ENCODE measurements at regions of chrX and their contacts with region 1.

Region 1: DNA sequence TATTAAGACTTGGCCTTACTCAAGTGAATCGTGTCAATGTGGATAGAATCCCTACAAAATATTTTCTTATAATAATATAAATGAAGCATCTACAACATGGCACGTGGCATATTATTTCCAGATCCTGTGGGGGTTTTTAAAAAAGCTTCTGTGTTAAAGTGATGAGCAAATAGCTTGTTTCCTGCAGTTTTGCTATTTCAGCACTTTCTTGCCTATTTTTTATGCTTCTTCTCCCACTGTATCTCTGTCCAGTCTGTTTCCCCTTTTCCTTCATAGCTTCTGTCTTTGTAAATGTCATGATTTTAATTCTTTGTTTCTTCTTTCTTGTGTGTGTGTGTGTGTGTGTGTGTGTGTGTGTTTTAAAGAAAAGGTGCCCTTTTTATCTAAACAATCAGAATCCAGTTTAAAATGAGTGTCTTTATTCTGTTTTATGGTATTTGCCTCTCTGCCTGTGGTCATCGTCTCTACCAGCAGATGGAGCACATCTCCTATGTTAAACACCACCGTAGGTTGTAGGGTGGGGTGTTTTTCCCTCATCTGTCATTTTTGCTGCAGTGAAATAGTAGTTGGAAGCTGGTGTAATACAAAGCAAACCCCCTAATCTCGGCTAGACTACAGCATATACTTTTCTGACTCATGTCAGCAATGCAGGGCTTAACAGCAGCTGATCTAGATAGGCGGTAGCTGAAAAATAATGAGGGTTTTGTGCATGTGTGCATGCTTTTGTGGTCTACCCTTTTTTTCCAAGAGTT is 33.1 kb downstream of the FTHL17 start:
- DNase-seq: peak; percentile 3 to 6
- ATAC-seq: peak in 1 of 2 experiments; percentile 69; a peak in 3 of 6 replicates
- H3K4me3 ChIP-seq: no peak overlapping the region
- H3K27ac ChIP-seq: no peak overlapping the region
- H3K4me1 ChIP-seq: no peaks in the 10 kb centered on the region
- CTCF ChIP-seq: peak; percentile 35; the same call in 2 of the 3 replicates
- EP300 ChIP-seq: no peak
- POLR2A ChIP-seq: no peak
- RAD21 ChIP-seq: peak; percentile 35 to 47; a peak in 4 of 5 replicates

Region 2: DNA sequence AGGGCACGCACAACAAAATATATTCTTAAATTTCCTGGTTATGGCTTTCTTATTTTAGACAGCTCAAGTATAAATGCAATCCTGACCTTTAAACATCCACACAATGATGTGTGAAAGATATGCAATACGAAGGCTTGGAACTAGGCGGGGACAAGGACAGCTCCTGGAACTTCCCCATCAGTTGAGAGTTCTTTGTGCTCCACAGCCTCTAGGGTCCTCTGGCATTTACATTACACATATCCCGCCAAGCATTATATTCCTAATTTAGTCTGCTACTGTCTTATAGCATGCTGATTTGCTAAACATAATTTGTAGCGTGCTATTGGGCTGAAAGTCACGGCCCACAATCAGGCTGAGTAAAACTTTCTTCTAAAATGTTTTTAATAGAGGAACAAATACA is 41.3 kb before region 1 on chrX:
- CTCF ChIA-PET with region 1: no interaction called
- POLR2A ChIA-PET with region 1: no interaction called
- DNase-seq: no peak
- ATAC-seq: no peak
- H3K4me3 ChIP-seq: no peak overlapping the region
- H3K27ac ChIP-seq: no peak overlapping the region
- H3K4me1 ChIP-seq: no peaks in the 10 kb centered on the region
- CTCF ChIP-seq: no peak
- EP300 ChIP-seq: no peak
- POLR2A ChIP-seq: no peak
- RAD21 ChIP-seq: no peak

Region 3: GRCh38 chrX:31053621-31054020 is 14.9 kb after region 1 on chrX:
- CTCF ChIA-PET with region 1: interaction called, 16 read pairs
- POLR2A ChIA-PET with region 1: no interaction called
- DNase-seq: no peak
- ATAC-seq: no peak
- H3K4me3 ChIP-seq: no peak overlapping the region
- H3K27ac ChIP-seq: no peak overlapping the region
- H3K4me1 ChIP-seq: no peaks in the 10 kb centered on the region
- CTCF ChIP-seq: no peak
- EP300 ChIP-seq: no peak
- POLR2A ChIP-seq: no peak
- RAD21 ChIP-seq: no peak

Region 4: DNA sequence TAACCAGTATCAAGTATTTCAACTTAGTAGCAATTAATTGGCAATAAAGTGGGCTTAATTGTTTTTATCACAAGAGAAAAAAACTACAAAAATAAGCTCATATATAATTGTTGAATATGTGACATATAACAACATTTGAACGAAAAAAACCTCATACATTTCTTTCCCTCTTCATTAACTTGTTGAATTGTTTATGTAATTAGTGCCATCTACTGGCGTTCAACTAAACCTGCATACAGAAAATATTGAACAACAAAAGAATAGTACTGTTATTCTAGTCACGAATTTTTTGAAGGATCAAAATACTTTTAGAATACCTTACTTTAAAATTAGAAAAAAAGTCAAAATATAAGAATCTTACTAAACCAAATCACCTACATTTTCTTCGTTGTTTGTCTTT is 619.6 kb after region 1 on chrX:
- CTCF ChIA-PET with region 1: interaction called, 29 read pairs
- POLR2A ChIA-PET with region 1: no interaction called
- DNase-seq: peak in 1 of 2 experiments; percentile 2
- ATAC-seq: no peak
- H3K4me3 ChIP-seq: no peak overlapping the region
- H3K27ac ChIP-seq: no peak overlapping the region
- H3K4me1 ChIP-seq: no peaks in the 10 kb centered on the region
- CTCF ChIP-seq: peak; percentile 46
- EP300 ChIP-seq: no peak
- POLR2A ChIP-seq: no peak
- RAD21 ChIP-seq: peak; percentile 48 to 57; a peak in 4 of 5 replicates